ENCODE measurements at regions of chr5 and their contacts with region 1.

Region 1: DNA sequence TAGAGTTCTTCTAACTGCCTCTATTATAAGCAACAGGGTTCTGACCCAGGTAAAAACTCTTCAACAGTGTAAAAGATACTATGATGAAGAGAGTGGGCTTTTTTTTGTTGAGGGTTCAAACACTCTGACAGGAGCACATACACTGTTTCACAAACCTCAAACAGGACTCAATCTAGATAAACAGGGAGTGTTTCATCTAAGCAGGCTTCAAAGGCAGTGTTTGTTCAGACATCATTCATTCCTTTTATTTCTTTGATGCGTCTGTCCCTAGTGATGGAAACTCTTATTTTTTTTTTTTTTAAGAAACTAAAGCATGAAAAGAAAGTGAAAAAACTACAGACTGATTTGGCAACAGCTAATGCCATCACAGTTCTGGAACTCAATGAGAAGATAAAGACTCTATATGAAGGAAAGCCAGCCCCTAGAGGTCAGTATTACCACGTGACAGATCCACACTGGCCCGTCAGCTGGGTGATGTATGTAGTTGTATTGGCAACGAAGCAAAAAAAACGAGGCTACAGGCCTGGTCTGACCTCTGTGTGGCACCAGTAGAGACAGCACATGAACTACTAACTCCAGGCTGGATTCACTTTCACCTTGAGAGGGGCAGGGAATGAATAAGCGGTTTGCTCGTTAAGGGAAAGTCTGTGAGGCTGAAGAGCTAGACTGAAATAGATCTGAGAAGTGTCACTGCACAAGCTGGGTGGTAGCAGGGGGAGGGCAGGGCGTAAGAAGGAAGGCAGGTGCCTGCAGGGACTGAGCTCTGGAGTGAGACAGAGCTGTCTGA is 172.2 kb downstream of the CCDC192 start:
- DNase-seq: no peak

Region 2: DNA sequence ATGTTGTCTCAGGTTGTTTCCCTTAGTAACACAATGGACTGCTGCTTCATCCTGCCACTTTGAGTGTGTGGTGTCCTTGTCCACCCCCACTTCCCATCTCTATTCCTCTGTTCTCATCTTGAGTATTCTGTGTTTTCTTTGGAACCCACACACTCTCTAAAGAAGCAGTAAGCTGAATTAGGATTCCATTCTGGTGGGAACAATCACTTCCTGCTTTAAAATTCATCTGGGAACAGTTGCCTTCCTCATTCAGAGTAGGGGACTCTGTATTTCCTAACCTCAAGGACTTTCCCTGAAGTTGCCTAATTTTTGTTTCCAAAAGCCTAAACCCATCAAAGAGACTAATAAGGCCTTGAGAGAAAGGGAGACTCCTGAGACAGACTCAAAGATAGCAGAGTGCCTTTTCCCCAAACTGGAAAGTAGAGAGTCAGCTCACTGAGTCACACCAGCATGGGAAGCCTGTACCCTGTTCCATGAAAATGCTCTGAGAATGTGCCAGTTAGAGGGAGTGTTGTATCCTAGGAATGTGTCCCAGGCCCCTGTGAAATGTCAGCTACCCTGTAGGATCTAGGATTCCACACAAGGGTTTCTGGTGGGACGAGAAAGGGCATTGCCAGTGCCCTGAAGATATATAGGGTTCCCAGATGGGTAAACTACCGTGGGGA is 108.6 kb before region 1 on chr5:
- intact Hi-C with region 1: loop called (anchors 10 kb)
- DNase-seq: no peak

Region 3: DNA sequence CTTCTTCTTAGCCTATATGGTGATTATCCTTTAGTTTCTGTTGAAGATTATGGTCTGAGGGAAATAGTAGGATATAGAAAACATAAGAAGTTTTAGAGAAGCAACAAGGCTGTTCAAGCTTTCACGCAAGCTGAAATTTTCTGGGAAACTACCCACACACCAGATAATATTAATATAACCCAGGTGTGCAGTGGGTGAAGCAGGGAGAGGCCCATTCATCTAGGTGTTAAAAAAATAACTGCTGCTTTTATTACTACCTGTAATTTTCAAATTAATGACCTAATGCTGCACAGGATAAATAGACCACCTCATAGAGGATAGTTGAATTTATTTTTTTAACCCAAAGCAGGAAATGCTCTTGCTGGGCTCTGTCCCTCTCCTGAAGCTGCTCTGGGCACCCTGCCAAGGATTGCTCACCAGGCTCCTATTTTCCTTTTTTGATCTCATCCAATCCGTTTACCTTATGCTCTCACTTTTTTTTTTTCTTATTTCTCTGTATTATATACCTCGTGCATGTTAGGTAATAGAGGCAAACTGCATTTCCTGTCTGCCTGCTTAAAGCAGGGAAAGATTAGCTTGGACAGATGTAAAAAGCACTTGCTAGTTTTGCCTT is 83.8 kb after region 1 on chr5:
- intact Hi-C with region 1: loop called (anchors 5 kb)
- DNase-seq: no peak

Region 4: GRCh38 chr5:127988146-127988760 is 112.8 kb after region 1 on chr5:
- intact Hi-C with region 1: no loop called
- DNase-seq: no peak

Region 5: GRCh38 chr5:128201065-128201926 is 325.9 kb after region 1 on chr5:
- intact Hi-C with region 1: loop called (anchors 10 kb)
- DNase-seq: peak; percentile 90